Spleen (tissue), 13 donors: ENCODE measurements at regions of chrX and their contacts with region 1.

Region 1: GRCh38 chrX:109714340-109714958 is 18.6 kb downstream of the ACSL4 start:
- DNase-seq: no peak
- H3K4me3 ChIP-seq: no peak overlapping the region
- H3K27ac ChIP-seq: peak overlapping the region in 2 of 8 donors; percentile 5 to 23
- H3K4me1 ChIP-seq: peaks cover 0 to 72% (median 20%) of the 10 kb centered on the region in 6 donors
- H3K27me3 ChIP-seq: no peaks in the 10 kb centered on the region
- CTCF ChIP-seq: no peak
- POLR2A ChIP-seq: no peak

Region 2: DNA sequence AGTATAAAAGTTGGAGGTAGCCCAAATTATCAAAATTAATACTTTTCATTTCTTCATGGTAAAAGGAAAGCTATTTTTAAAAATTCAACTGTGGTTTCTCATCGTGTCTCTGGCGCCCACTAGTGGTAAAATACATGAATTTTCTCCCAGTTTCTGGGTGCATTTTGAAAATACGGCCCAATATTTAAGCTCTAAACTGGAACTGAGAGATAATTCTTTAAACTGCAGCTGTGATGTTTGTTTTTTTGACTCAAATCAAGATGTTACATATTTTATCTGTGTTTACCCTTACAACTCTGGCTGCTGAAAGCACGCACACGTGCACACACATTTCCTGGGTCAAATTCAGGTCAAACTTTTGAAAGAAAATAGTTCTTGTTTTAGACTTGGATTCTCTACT is 142.5 kb after region 1 on chrX:
- intact Hi-C with region 1: loop called (anchors 5 kb)
- DNase-seq: no peak
- H3K4me3 ChIP-seq: no peak overlapping the region
- H3K27ac ChIP-seq: peak overlapping the region in 1 of 8 donors; percentile 23
- H3K4me1 ChIP-seq: peaks cover 0 to 16% (median 0%) of the 10 kb centered on the region in 6 donors
- H3K27me3 ChIP-seq: no peaks in the 10 kb centered on the region
- CTCF ChIP-seq: peak; percentile 31 to 79 (median 70)
- POLR2A ChIP-seq: no peak